ENCODE measurements at regions of chr7 and their contacts with region 1.

Region 1: GRCh38 chr7:91940572-91941341 is at the start of gene AKAP9:
- DNase-seq: peak; percentile 97
- ATAC-seq: peak; percentile 96
- total RNA-seq, gene AKAP9: 44.1 TPM

Region 2: GRCh38 chr7:92042056-92042737 is 101.4 kb after region 1 on chr7:
- intact Hi-C with region 1: loop called (anchors 10 kb)
- DNase-seq: no peak
- ATAC-seq: no peak